Heart left ventricle (tissue), 16 donors: ENCODE measurements at regions of chr2 and their contacts with region 1.

Region 1: DNA sequence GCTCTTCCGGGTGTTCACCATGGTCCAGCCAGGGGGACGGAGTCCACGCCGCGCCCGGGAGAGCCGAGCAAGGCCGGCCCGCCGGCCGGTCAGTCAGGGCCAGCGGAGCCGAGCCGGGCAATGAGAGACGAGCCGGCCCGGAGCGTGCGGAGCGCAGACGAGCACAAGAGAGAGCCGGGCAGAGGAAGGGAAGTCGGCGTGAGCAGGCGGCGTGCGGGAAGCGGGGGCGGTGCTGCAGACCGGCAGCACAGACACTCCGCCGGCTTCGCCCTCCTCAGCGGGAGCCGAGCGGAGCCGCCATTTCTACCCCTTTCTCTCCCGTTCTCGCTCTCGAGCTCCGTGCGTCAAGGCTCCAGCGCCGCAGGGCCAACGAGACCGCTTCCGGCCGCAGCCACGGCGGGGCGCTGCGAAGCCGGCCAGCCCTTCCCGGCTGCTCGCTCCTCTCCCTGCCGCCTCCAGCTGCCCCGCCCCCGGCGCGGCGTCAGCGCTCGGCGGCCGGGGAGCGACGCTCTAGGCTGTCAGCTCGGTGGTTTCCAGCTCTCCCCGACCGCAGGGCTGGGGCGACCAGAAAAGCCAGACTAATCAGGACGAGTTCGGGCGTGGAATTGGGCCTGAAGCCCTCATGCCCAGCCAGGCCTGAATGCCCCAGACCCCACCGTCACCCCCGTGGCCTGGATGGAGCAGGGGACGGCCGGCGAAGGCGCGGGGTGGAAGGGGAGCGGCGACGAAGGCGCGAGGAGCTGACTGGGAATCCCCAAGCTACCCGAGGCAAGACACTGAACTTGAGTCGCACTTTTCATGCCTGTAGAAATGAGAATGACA is at the start of gene ATAD2B:
- DNase-seq: peak; percentile 89 to 96 (median 93)
- ATAC-seq: peak; percentile 85 to 96 (median 94)
- H3K4me3 ChIP-seq: peak within 1 kb of the TSS; percentile 64 to 96 (median 84)
- H3K27ac ChIP-seq: peak within 1 kb of the TSS; percentile 86 to 99 (median 97)
- H3K4me1 ChIP-seq: peaks cover 2 to 47% (median 32%) of the 10 kb centered on the region in 12 donors
- H3K27me3 ChIP-seq: no peaks in the 10 kb centered on the region
- CTCF ChIP-seq: peak; percentile 72 to 98 (median 90)
- POLR2A ChIP-seq: peak in 1 of 2 donors; percentile 76
- total RNA-seq, gene ATAD2B: 5.0 to 13.3 (median 8.3) TPM

Region 2: GRCh38 chr2:23824777-23825212 is 102.2 kb before region 1 on chr2:
- intact Hi-C with region 1: loop called in 1 of 10 experiments (anchors 2 kb)
- DNase-seq: no peak
- ATAC-seq: peak in 2 of 4 donors; percentile 24 to 46
- H3K4me3 ChIP-seq: no peak overlapping the region
- H3K27ac ChIP-seq: no peak overlapping the region
- H3K4me1 ChIP-seq: peaks cover 0 to 12% (median 0%) of the 10 kb centered on the region in 12 donors
- H3K27me3 ChIP-seq: no peaks in the 10 kb centered on the region
- CTCF ChIP-seq: peak; percentile 53 to 76 (median 67)
- POLR2A ChIP-seq: no peak

Region 3: DNA sequence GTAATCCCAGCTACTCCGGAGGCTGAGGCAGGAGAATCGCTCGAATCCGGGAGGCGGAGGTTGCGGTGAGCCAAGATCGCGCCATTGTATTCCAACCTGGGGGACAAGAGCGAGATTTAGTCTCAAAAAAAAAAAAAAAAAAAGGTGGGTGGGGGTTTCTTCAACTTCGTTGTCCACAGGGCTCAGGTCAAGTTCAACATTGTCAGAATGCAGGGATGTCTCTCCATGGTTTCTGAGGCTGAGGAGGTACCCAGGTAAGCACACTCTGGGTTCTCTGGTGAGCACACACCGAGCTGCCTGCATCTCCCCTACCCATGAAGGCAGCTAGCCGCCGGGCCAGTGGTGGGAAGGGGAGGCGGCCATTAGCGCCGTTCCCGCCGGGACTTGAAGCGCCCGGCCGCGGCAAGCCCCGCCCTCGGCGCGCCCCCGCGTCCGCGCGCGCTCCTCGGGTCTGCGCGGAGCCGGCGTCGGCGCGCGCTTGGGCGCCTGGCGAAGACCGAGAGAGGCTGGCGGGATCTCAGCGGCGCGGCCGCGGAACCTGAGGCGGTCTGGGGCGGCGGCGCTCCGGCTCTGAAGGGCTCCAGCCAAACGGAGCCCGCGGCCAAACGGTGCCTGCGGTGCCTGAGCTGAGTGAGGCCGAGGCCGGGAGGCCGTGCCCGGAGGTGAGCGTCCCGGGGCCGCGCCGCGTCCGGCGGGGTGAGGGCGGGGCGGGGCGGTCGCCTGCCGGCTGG is 13.2 kb after region 1 on chr2 and contains the start of gene UBXN2A:
- intact Hi-C with region 1: loop called in 2 of 10 experiments (anchors 1 to 2 kb)
- DNase-seq: peak; percentile 75 to 90 (median 82)
- ATAC-seq: peak; percentile 78 to 96 (median 93)
- H3K4me3 ChIP-seq: peak within 1 kb of the TSS; percentile 62 to 97 (median 82)
- H3K27ac ChIP-seq: peak within 1 kb of the TSS; percentile 84 to 97 (median 92)
- H3K4me1 ChIP-seq: peaks cover 0 to 31% (median 24%) of the 10 kb centered on the region in 12 donors
- H3K27me3 ChIP-seq: no peaks in the 10 kb centered on the region
- CTCF ChIP-seq: no peak
- POLR2A ChIP-seq: peak in 1 of 2 donors; percentile 57
- total RNA-seq, gene UBXN2A: 15.8 to 24.0 (median 19.6) TPM

Region 4: GRCh38 chr2:24046930-24047702 is 120.2 kb after region 1 on chr2 and contains the start of gene WDCP:
- intact Hi-C with region 1: loop called in 3 of 10 experiments (anchors 1 to 10 kb)
- DNase-seq: peak; percentile 93 to 97 (median 96)
- ATAC-seq: peak; percentile 99 to 100 (median 100)
- H3K4me3 ChIP-seq: peak within 1 kb of the TSS; percentile 52 to 87 (median 73)
- H3K27ac ChIP-seq: peak within 1 kb of the TSS in 10 of 12 donors; percentile 33 to 79 (median 68)
- H3K4me1 ChIP-seq: peaks cover 0 to 39% (median 19%) of the 10 kb centered on the region in 12 donors
- H3K27me3 ChIP-seq: no peaks in the 10 kb centered on the region
- CTCF ChIP-seq: no peak
- POLR2A ChIP-seq: peak in 1 of 2 donors; percentile 86
- total RNA-seq, gene WDCP: 4.9 to 9.8 (median 6.1) TPM

Region 5: GRCh38 chr2:24075915-24076848 is 149.2 kb after region 1 on chr2 and contains the start of gene SF3B6:
- intact Hi-C with region 1: loop called in 9 of 10 experiments (anchors 1 to 10 kb)
- DNase-seq: peak; percentile 96 to 98 (median 97)
- ATAC-seq: peak; percentile 97 to 98 (median 97)
- H3K4me3 ChIP-seq: peak within 1 kb of the TSS; percentile 33 to 95 (median 81)
- H3K27ac ChIP-seq: peak within 1 kb of the TSS; percentile 42 to 94 (median 87)
- H3K4me1 ChIP-seq: peaks cover 0 to 28% (median 15%) of the 10 kb centered on the region in 12 donors
- H3K27me3 ChIP-seq: no peaks in the 10 kb centered on the region
- CTCF ChIP-seq: peak in 1 of 12 donors; percentile 6
- POLR2A ChIP-seq: peak in 1 of 2 donors; percentile 61
- total RNA-seq, gene SF3B6: 49.7 to 89.6 (median 58.4) TPM